Heart left ventricle (tissue), 16 donors: ENCODE measurements at regions of chr11 and their contacts with region 1.

Region 1: DNA sequence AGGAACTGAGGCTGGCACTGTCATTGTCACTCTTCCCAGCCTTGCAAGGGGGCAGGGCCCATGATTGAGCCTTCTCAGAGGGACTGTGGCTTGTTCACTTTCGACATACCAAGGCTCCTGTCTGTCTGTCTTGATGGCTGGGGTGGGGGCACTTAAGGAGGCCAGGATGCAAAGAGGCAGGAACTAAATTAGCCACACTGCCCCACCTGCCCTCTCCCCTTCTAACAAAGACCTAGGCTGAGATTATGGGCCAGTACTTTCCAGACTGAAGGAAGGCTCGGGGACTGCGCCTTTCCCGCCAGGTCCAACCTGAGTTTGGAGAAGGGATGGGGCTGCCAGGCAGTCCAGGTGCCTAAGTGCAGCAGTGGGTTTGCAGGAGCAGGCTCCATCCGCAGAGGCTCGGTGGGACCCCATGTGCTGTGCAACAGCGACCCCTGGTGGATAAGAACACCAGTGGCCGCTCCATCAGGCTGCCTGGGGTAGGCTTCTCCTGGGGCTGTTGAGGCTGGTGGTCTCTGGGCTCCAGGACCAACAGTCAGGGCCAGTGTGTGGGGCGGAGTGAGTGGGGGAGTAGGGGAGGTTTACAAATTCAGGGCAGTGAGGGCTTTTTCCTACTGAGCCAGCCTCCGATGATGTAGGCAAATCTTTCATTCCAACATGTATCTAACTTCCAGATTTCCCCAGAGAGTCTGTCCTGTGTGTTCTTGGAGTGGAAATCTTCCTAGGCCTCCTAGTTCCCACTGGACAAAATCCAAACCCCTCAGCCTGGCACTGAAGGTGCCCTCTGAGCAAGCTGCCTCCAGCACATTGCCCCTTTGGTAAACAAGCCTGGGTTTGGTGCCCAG is 93.9 kb downstream of the INSC start:
- DNase-seq: peak; percentile 56 to 85 (median 67)
- ATAC-seq: peak; percentile 78 to 92 (median 89)
- H3K4me3 ChIP-seq: no peak overlapping the region
- H3K27ac ChIP-seq: no peak overlapping the region
- H3K4me1 ChIP-seq: no peaks in the 10 kb centered on the region
- H3K27me3 ChIP-seq: no peaks in the 10 kb centered on the region
- CTCF ChIP-seq: peak; percentile 72 to 92 (median 84)
- POLR2A ChIP-seq: no peak

Region 2: GRCh38 chr11:14974515-14975251 is 233.9 kb before region 1 on chr11:
- intact Hi-C with region 1: loop called in 1 of 10 experiments (anchors 10 kb)
- DNase-seq: peak in 3 of 5 donors; percentile 38 to 61 (median 44)
- ATAC-seq: peak in 3 of 4 donors; percentile 60 to 81 (median 67)
- H3K4me3 ChIP-seq: peak overlapping the region in 10 of 12 donors; percentile 14 to 47 (median 35)
- H3K27ac ChIP-seq: no peak overlapping the region
- H3K4me1 ChIP-seq: peaks cover 0 to 36% (median 14%) of the 10 kb centered on the region in 12 donors
- H3K27me3 ChIP-seq: peaks cover 30 to 92% (median 66%) of the 10 kb centered on the region in 9 donors
- CTCF ChIP-seq: peak; percentile 23 to 61 (median 46)
- POLR2A ChIP-seq: no peak

Region 3: GRCh38 chr11:15101072-15101709 is 107.4 kb before region 1 on chr11:
- intact Hi-C with region 1: loop called (anchors 1 to 2 kb)
- DNase-seq: peak; percentile 40 to 71 (median 54)
- ATAC-seq: peak in 3 of 4 donors; percentile 82 to 85 (median 85)
- H3K4me3 ChIP-seq: no peak overlapping the region
- H3K27ac ChIP-seq: no peak overlapping the region
- H3K4me1 ChIP-seq: no peaks in the 10 kb centered on the region
- H3K27me3 ChIP-seq: peaks cover 0 to 22% (median 9%) of the 10 kb centered on the region in 9 donors
- CTCF ChIP-seq: peak; percentile 84 to 94 (median 90)
- POLR2A ChIP-seq: no peak